ENCODE measurements at regions of chrX and their contacts with region 1.

Region 1: DNA sequence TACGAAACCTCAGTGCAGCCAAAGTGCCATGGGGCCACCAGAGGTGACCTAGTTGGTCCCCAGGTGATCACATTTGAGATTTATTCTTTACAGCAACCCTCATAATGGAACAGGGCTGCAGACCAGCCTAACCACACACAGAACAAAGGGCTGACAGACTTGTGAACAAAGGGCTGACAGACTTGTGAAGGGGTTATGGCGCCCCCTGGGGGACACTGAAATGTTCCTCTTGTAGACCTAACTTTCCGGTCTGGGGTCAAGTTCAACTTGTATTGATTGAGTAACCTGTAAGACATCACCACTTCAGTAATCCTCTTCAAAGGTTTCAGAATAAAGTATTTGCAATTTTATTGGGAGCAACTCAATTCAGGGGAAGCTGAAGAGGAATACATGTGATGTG is 175.9 kb upstream of the RPS6KA3 start:
- DNase-seq: peak; percentile 60 to 74
- H3K4me3 ChIP-seq: no peak overlapping the region
- H3K27ac ChIP-seq: no peak overlapping the region
- H3K4me1 ChIP-seq: peaks cover 7% of the 10 kb centered on the region; the same call in 1 of the 2 replicates
- H3K27me3 ChIP-seq: no peaks in the 10 kb centered on the region
- CTCF ChIP-seq: peak; percentile 79

Region 2: DNA sequence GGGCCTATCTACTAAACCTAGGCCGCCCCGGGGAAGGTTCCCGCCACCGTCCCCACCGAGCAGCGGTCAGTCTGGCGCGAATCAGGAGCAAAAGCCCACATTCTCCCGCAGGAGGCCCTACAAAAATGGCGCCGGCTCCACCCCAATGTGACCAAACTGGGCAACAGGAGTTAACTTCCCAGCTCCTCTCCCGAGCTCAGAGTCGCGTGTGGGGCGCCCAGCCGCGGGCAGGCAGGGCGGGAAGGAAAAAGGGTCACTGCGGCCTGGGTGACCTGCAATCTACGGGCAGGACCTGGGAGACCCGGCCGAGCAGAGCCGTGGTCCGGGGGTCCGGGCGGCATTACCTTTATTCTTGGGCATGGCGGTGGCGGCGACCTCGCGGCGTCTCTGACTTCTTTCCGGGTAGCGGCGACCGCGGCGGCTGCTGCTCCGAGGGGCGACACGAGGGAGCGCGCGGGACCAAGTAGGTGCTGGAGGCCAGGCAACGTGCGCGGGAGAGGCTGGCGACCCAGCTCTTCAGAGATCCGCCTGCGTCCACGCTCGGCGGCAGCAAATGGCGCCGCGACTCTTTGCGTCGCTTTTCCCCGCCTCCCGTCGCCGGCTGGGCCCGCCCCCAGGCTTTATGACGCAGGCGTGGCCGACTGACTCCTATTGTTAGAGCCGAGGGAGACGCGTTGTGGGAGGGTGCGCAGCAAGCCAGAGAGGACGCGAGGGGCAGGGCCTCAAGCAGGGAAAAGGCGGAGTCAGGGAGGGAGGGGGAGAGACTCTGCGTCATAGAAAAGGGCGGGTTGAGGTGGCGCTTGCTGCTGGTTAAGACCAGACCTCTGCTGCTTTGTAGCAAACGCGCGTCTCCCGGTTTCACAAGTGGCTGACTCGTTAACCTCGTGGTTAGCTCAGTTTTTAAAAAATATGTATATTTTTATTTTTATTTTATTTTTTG is 301.0 kb before region 1 on chrX and contains the start of gene EIF1AX:
- CTCF ChIA-PET with region 1: no interaction called
- POLR2A ChIA-PET with region 1: no interaction called
- intact Hi-C with region 1: loop called (anchors 5 kb)
- DNase-seq: peak; percentile 90 to 96
- H3K4me3 ChIP-seq: peak within 1 kb of the TSS; percentile 95
- H3K27ac ChIP-seq: peak within 1 kb of the TSS; percentile 61
- H3K4me1 ChIP-seq: peaks cover 13% of the 10 kb centered on the region
- H3K27me3 ChIP-seq: no peaks in the 10 kb centered on the region
- CTCF ChIP-seq: no peak
- total RNA-seq, gene EIF1AX: 77.3 TPM in 2 replicates

Region 3: GRCh38 chrX:20320461-20321159 is 122.0 kb before region 1 on chrX:
- CTCF ChIA-PET with region 1: no interaction called
- POLR2A ChIA-PET with region 1: no interaction called
- intact Hi-C with region 1: no loop called
- DNase-seq: no peak
- H3K4me3 ChIP-seq: no peak overlapping the region
- H3K27ac ChIP-seq: no peak overlapping the region
- H3K4me1 ChIP-seq: no peaks in the 10 kb centered on the region
- H3K27me3 ChIP-seq: no peaks in the 10 kb centered on the region
- CTCF ChIP-seq: no peak